HEK293T (cell line): ENCODE measurements at regions of chr15 and their contacts with region 1.

Region 1: GRCh38 chr15:83380682-83381081 is 66.5 kb upstream of the SH3GL3 start:
- DNase-seq: peak; percentile 21

Region 2: GRCh38 chr15:83248151-83249029 is 132.3 kb before region 1 on chr15:
- CTCF ChIA-PET with region 1: interaction called, 17 read pairs
- POLR2A ChIA-PET with region 1: no interaction called
- DNase-seq: peak; percentile 60